HEK293 (cell line): ENCODE measurements at regions of chr12 and their contacts with region 1.

Region 1: DNA sequence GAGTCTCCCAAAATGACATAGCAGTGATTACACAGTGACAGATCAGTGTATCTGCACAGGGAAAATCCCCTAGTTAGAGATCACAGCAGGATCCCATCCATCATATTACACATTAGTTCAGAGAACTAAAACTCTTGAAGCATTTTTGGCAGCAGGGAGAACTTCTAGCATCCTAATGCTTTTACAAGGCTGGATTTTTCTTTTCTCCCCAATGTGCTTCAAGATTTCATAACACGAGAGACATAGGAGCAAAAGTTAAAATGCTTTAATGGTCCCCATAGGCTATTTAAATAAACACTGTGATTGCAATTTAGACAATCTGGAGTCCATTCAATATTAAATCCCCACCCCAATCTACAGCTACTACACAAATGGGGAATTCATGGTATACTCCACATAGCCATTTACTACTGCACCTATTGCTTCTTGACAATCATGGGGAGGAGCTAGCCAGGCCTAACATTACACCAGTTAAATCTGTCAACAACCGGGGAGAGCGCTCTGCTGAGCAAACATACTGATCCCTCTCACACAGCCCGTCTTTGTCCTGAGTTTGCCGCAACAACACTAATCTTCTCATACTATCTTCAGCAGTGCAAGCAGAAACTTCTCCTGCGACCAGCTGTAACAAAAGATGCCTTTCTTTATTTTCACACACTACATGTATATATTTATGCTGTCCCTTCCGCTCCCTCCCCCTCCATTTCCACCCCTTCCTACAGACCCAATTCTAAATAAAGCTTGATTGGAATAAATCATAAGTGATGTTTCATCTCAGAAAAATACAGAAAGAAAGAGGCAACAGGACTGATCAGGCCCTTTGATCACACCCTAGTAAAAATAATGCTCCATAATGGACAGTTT is 120.3 kb upstream of the SOX5 start:
- H3K4me3 ChIP-seq: no peak overlapping the region
- H3K27ac ChIP-seq: peak overlapping the region; percentile 8; the same call in 1 of the 2 replicates
- H3K4me1 ChIP-seq: peaks cover 45% of the 10 kb centered on the region
- CTCF ChIP-seq: no peak

Region 2: GRCh38 chr12:23504043-23504442 is 565.7 kb before region 1 on chr12:
- CTCF ChIA-PET with region 1: interaction called, 10 read pairs
- POLR2A ChIA-PET with region 1: no interaction called
- H3K4me3 ChIP-seq: no peak overlapping the region
- H3K27ac ChIP-seq: no peak overlapping the region
- H3K4me1 ChIP-seq: no peaks in the 10 kb centered on the region
- CTCF ChIP-seq: no peak